Pancreas (tissue), 10 donors: ENCODE measurements at regions of chr9 and their contacts with region 1.

Region 1: DNA sequence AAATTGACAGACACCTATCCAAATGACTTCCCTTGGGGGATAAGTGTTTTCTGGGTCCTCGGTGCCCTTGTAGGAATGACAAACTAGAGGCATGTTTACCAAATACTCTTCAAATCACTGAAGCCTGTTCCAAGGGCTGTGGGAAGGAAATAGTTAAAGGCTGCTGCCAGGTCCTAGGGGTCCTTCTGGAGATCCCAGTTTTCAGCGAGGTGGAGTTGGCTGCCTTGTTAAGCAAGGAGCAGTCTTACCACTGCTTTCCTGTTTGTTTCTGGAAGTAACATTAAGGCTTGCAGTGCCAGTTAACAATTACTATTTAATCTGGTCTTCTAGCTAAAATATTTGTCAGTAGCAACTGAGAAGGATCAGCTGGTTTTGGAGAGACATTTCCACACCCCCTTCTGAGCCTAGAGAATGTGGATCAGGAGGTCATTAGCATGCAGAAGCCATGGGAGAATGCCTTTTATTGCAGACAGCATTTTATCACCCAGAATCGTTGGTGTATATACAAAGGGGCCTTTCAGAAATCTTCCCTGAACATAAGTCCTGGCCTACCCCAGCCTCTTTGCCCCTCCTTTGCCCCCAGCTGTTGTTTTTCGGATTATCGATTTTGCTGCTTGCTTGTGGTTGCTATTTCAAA is 238.8 kb downstream of the DMAC1 start:
- DNase-seq: peak in 2 of 6 donors; percentile 13 to 14
- ATAC-seq: peak in 3 of 4 donors; percentile 59 to 86 (median 68)
- H3K4me3 ChIP-seq: no peak overlapping the region
- H3K27ac ChIP-seq: peak overlapping the region in 3 of 4 donors; percentile 10 to 19 (median 13)
- H3K4me1 ChIP-seq: peaks cover 0 to 8% (median 0%) of the 10 kb centered on the region in 3 donors
- H3K27me3 ChIP-seq: no peaks in the 10 kb centered on the region
- CTCF ChIP-seq: no peak

Region 2: DNA sequence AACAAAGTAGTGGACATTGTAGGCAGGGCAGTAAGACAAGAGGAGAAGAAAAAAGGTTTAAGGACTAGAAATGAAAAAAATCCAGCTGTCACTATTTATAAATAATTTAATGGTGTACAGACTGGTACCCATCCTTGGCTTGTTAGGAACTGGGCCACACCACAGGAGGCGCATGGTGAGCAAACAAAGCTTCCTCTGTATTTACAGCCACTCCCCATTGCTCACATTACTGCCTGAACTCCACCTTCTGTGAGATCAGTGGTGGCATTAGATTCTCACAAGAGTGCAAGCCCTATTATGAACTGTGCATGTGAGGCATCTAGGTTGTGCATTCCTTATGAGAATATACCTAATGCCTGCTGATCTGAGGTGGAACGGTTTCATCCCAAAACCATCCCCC is 301.4 kb after region 1 on chr9:
- intact Hi-C with region 1: no loop called
- DNase-seq: no peak
- ATAC-seq: no peak
- H3K4me3 ChIP-seq: no peak overlapping the region
- H3K27ac ChIP-seq: no peak overlapping the region
- H3K4me1 ChIP-seq: no peaks in the 10 kb centered on the region
- H3K27me3 ChIP-seq: no peaks in the 10 kb centered on the region
- CTCF ChIP-seq: no peak

Region 3: GRCh38 chr9:8895861-8896224 is 1335.1 kb after region 1 on chr9:
- intact Hi-C with region 1: loop called in 1 of 3 experiments (anchors 10 kb)
- DNase-seq: no peak
- ATAC-seq: peak in 3 of 4 donors; percentile 76 to 78 (median 77)
- H3K4me3 ChIP-seq: no peak overlapping the region
- H3K27ac ChIP-seq: no peak overlapping the region
- H3K4me1 ChIP-seq: no peaks in the 10 kb centered on the region
- H3K27me3 ChIP-seq: no peaks in the 10 kb centered on the region
- CTCF ChIP-seq: peak in 2 of 4 donors; percentile 39 to 42